ENCODE measurements at regions of chr19 and their contacts with region 1.

Region 1: GRCh38 chr19:4052050-4052999 is 14.4 kb downstream of the ZBTB7A start:
- DNase-seq: peak; percentile 85
- H3K4me3 Mint-ChIP-seq: peak overlapping the region; percentile 56
- H3K27ac Mint-ChIP-seq: peak overlapping the region; percentile 78
- H3K4me1 Mint-ChIP-seq: peaks cover 34% of the 10 kb centered on the region
- H3K27me3 Mint-ChIP-seq: no peaks in the 10 kb centered on the region
- CTCF ChIP-seq: no peak

Region 2: DNA sequence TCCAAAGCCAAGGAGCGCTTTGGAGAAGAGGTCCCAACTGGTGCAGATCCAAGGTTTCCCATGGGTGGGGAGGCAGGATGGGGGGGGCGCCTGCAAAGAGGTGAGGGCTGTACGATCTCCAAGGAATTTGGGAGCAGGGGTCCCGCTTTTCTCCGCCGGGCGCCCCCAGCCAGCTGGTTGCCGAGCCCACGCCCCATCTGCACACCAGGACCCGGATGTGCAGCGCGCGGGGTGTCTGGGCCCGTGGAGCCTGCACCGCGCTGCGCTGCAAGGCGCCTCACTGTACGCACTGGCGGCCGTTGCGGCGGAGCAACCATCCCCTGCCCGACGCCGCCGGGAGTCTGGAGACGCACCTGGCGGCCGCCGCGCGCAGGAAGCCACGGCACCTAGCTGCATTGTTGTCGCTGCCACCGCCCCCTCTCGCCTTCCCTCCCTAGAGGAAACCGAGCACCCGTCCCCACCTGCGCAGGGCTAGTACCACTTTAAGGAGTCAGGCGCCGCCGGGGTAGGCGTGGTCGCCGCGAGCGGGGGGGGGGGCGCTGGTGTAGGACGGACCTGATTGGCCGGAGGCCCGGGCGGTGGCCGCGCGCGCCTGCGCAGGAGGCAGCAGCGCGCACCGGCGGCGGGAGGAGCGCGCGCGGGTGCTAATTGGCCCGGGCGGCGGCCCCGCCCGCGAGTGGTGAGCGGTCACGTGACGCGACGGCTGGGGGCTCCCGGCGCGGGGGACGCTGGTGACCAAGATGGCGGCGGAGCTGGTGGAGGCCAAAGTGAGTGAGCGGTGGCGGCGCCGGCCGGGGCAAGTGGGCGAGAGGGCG is 45.1 kb before region 1 on chr19 and contains the start of gene PIAS4:
- CTCF ChIA-PET with region 1: no interaction called
- POLR2A ChIA-PET with region 1: interaction called, 3 read pairs
- intact Hi-C with region 1: loop called (anchors 5 kb)
- DNase-seq: peak; percentile 95
- H3K4me3 Mint-ChIP-seq: peak within 1 kb of the TSS; percentile 83
- H3K27ac Mint-ChIP-seq: peak within 1 kb of the TSS; percentile 90
- H3K4me1 Mint-ChIP-seq: peaks cover 17% of the 10 kb centered on the region
- H3K27me3 Mint-ChIP-seq: no peaks in the 10 kb centered on the region
- CTCF ChIP-seq: no peak
- total RNA-seq, gene PIAS4: 15.1 and 31.4 TPM in 2 replicates

Region 3: DNA sequence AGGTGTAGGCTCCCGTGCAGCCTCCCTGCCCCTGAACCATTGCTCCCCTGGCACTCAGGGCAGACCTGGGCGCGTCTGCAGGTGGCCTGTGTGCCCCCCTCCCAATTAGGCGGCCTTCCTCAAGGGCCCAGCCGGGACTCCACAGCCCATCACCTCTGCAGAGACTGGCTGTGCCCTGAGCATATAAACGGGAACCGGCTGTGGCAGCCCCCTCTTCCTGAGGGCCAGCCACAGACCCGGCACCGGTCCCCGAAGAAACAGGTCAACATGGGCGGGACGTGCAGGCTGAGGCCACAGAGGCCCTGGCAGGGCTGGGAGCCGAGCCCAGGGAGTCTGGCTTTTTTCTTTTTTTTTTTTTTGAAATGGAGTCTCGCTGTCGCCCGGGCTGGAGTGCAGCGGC is 32.7 kb before region 1 on chr19:
- CTCF ChIA-PET with region 1: no interaction called
- POLR2A ChIA-PET with region 1: no interaction called
- intact Hi-C with region 1: no loop called
- DNase-seq: no peak
- H3K4me3 Mint-ChIP-seq: no peak overlapping the region
- H3K27ac Mint-ChIP-seq: no peak overlapping the region
- H3K4me1 Mint-ChIP-seq: no peaks in the 10 kb centered on the region
- H3K27me3 Mint-ChIP-seq: no peaks in the 10 kb centered on the region
- CTCF ChIP-seq: no peak

Region 4: GRCh38 chr19:4034048-4035017 is 18.0 kb before region 1 on chr19:
- CTCF ChIA-PET with region 1: no interaction called
- POLR2A ChIA-PET with region 1: no interaction called
- intact Hi-C with region 1: no loop called
- DNase-seq: no peak
- H3K4me3 Mint-ChIP-seq: no peak overlapping the region
- H3K27ac Mint-ChIP-seq: no peak overlapping the region
- H3K4me1 Mint-ChIP-seq: no peaks in the 10 kb centered on the region
- H3K27me3 Mint-ChIP-seq: no peaks in the 10 kb centered on the region
- CTCF ChIP-seq: no peak